MCF 10A (cell line): ENCODE measurements at regions of chr11 and their contacts with region 1.

Region 1: GRCh38 chr11:120688163-120688562 is 176.6 kb downstream of the GRIK4 start:
- DNase-seq: no peak
- H3K4me3 Mint-ChIP-seq: no peak overlapping the region
- H3K27ac Mint-ChIP-seq: no peak overlapping the region
- H3K4me1 Mint-ChIP-seq: no peaks in the 10 kb centered on the region
- H3K27me3 Mint-ChIP-seq: peaks cover 74% of the 10 kb centered on the region
- CTCF ChIP-seq: no peak

Region 2: DNA sequence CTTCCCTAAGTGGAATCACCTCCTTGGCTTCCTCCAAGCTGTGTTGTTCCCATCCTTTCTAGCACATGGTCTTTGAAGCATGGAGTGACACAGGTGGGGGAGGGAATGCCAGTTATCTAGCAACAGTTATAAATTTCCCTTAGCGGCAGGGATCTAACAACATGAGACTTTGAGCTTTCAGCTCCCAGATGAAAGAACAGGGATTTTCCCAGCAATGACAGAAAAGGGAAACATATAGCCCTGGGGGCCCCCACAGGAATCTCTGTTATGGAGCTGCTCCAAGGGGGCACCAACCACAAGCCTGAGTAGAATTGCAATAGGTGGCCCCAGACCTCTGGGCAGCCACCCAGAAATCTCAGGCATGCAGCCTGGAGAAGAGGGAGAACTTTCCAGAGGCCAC is 13.6 kb before region 1 on chr11:
- CTCF ChIA-PET with region 1: interaction called, 30 read pairs
- POLR2A ChIA-PET with region 1: no interaction called
- intact Hi-C with region 1: no loop called
- DNase-seq: no peak
- H3K4me3 Mint-ChIP-seq: no peak overlapping the region
- H3K27ac Mint-ChIP-seq: no peak overlapping the region
- H3K4me1 Mint-ChIP-seq: no peaks in the 10 kb centered on the region
- H3K27me3 Mint-ChIP-seq: peaks cover 46% of the 10 kb centered on the region
- CTCF ChIP-seq: no peak

Region 3: GRCh38 chr11:120929664-120930154 is 241.5 kb after region 1 on chr11:
- CTCF ChIA-PET with region 1: interaction called, 4 read pairs
- POLR2A ChIA-PET with region 1: no interaction called
- intact Hi-C with region 1: loop called (anchors 5 kb)
- DNase-seq: peak; percentile 62
- H3K4me3 Mint-ChIP-seq: no peak overlapping the region
- H3K27ac Mint-ChIP-seq: no peak overlapping the region
- H3K4me1 Mint-ChIP-seq: no peaks in the 10 kb centered on the region
- H3K27me3 Mint-ChIP-seq: peaks cover 5% of the 10 kb centered on the region
- CTCF ChIP-seq: peak; percentile 52

Region 4: GRCh38 chr11:120952461-120953434 is 264.6 kb after region 1 on chr11:
- CTCF ChIA-PET with region 1: interaction called, 11 read pairs
- POLR2A ChIA-PET with region 1: no interaction called
- intact Hi-C with region 1: loop called (anchors 1 kb)
- DNase-seq: peak; percentile 81
- H3K4me3 Mint-ChIP-seq: peak overlapping the region; percentile 49
- H3K27ac Mint-ChIP-seq: no peak overlapping the region
- H3K4me1 Mint-ChIP-seq: peaks cover 6% of the 10 kb centered on the region
- H3K27me3 Mint-ChIP-seq: peaks cover 54% of the 10 kb centered on the region
- CTCF ChIP-seq: peak; percentile 76